ENCODE measurements at regions of chr9 and their contacts with region 1.

Region 1: GRCh38 chr9:113042884-113043657 is 13.5 kb downstream of the ZFP37 start:
- DNase-seq: no peak
- ATAC-seq: no peak
- H3K4me3 Mint-ChIP-seq: no peak overlapping the region
- H3K27ac Mint-ChIP-seq: no peak overlapping the region
- H3K4me1 Mint-ChIP-seq: no peaks in the 10 kb centered on the region
- H3K27me3 Mint-ChIP-seq: no peaks in the 10 kb centered on the region

Region 2: DNA sequence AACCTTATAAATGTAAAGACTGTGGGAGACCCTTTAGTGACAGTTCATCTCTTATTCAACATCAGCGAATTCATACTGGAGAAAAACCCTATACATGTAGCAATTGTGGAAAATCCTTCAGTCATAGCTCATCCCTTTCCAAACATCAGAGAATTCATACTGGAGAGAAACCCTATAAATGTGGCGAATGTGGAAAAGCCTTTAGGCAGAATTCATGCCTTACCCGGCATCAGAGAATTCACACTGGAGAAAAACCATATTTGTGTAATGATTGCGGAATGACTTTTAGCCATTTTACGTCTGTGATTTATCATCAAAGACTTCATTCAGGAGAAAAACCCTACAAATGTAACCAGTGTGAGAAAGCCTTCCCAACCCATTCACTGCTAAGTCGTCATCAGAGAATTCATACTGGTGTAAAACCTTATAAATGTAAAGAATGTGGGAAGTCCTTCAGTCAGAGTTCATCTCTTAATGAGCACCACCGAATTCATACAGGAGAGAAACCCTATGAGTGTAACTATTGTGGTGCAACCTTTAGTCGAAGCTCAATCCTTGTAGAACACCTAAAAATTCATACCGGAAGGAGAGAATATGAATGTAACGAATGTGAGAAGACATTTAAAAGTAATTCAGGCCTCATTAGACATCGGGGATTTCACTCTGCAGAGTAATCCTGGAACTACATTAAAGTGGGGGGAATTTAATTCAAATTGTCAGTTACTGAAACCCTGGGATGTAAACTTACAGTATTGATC is 1500.4 kb before region 1 on chr9:
- CTCF ChIA-PET with region 1: no interaction called
- POLR2A ChIA-PET with region 1: no interaction called
- intact Hi-C with region 1: loop called in 1 of 2 experiments (anchors 10 kb)
- DNase-seq: no peak
- ATAC-seq: no peak
- H3K4me3 Mint-ChIP-seq: no peak overlapping the region
- H3K27ac Mint-ChIP-seq: no peak overlapping the region
- H3K4me1 Mint-ChIP-seq: no peaks in the 10 kb centered on the region
- H3K27me3 Mint-ChIP-seq: no peaks in the 10 kb centered on the region

Region 3: GRCh38 chr9:112858625-112859147 is 184.4 kb before region 1 on chr9:
- CTCF ChIA-PET with region 1: no interaction called
- POLR2A ChIA-PET with region 1: no interaction called
- intact Hi-C with region 1: no loop called
- DNase-seq: no peak
- ATAC-seq: no peak
- H3K4me3 Mint-ChIP-seq: no peak overlapping the region
- H3K27ac Mint-ChIP-seq: no peak overlapping the region
- H3K4me1 Mint-ChIP-seq: peaks cover 8% of the 10 kb centered on the region
- H3K27me3 Mint-ChIP-seq: no peaks in the 10 kb centered on the region

Region 4: DNA sequence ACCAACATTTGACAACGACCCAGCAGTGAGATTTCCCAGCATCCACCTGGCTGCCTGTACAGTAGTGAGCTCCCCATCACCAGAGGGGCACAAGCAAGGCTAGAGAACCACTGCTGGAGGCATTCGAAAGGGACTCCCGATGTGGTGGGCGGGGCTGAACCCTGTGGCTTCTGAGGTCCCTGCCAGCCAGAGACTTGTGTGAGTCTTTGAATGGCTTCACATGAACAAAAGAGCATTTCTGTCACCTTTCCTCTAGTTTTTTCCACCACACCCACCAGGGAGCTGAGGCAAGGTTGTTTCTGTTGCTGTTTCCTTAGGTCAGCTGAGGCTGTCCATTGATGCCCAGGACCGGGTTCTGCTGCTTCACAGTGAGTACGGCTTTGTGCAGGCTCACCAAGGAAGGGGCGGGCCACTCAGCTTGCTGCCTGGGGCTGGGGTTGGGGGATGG is 436.1 kb after region 1 on chr9:
- CTCF ChIA-PET with region 1: no interaction called
- POLR2A ChIA-PET with region 1: no interaction called
- intact Hi-C with region 1: no loop called
- DNase-seq: peak; percentile 50
- ATAC-seq: peak; percentile 61
- H3K4me3 Mint-ChIP-seq: no peak overlapping the region
- H3K27ac Mint-ChIP-seq: no peak overlapping the region
- H3K4me1 Mint-ChIP-seq: peaks cover 13% of the 10 kb centered on the region
- H3K27me3 Mint-ChIP-seq: peaks cover 1% of the 10 kb centered on the region